Calu3 (cell line): ENCODE measurements at regions of chr20 and their contacts with region 1.

Region 1: GRCh38 chr20:24257171-24257570 is 212.3 kb upstream of the SYNDIG1 start:
- DNase-seq: no peak
- H3K4me3 Mint-ChIP-seq: no peak overlapping the region
- H3K27ac Mint-ChIP-seq: no peak overlapping the region
- H3K4me1 Mint-ChIP-seq: no peaks in the 10 kb centered on the region
- H3K27me3 Mint-ChIP-seq: no peaks in the 10 kb centered on the region
- CTCF ChIP-seq: no peak

Region 2: DNA sequence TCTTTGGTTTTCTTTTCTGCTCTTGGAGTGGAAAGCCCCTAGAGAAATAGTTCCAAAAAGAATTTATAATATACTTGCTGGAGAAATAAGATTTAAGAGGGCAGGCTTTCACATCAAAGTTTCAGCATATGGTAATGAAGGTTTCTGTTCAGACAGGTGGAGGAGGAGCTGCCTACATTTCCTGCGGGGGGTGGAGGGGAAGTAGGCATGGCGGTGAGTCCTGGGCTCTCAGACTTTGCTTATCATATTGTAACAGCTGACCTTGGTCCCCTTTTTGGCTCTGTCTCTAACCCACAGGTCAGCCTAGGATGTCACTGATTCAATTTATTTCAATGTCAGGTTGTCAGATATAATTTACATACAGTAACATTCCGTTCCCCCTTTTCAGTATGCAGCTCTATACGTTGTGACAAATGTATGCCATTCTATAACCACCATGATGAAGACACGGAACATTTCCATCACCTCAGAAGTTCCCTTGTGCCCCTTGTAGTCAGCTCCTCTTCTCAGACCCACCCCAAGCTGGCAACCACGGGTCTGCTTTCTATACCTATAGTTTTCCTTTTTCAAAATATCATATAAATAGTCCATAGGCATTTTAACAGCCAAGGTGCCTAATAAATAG is 191.0 kb before region 1 on chr20:
- CTCF ChIA-PET with region 1: no interaction called
- intact Hi-C with region 1: no loop called
- DNase-seq: no peak
- H3K4me3 Mint-ChIP-seq: no peak overlapping the region
- H3K27ac Mint-ChIP-seq: no peak overlapping the region
- H3K4me1 Mint-ChIP-seq: no peaks in the 10 kb centered on the region
- H3K27me3 Mint-ChIP-seq: peaks cover 19% of the 10 kb centered on the region
- CTCF ChIP-seq: no peak

Region 3: GRCh38 chr20:24077145-24077544 is 180.0 kb before region 1 on chr20:
- CTCF ChIA-PET with region 1: no interaction called
- intact Hi-C with region 1: no loop called
- DNase-seq: no peak
- H3K4me3 Mint-ChIP-seq: no peak overlapping the region
- H3K27ac Mint-ChIP-seq: no peak overlapping the region
- H3K4me1 Mint-ChIP-seq: no peaks in the 10 kb centered on the region
- H3K27me3 Mint-ChIP-seq: no peaks in the 10 kb centered on the region
- CTCF ChIP-seq: no peak

Region 4: DNA sequence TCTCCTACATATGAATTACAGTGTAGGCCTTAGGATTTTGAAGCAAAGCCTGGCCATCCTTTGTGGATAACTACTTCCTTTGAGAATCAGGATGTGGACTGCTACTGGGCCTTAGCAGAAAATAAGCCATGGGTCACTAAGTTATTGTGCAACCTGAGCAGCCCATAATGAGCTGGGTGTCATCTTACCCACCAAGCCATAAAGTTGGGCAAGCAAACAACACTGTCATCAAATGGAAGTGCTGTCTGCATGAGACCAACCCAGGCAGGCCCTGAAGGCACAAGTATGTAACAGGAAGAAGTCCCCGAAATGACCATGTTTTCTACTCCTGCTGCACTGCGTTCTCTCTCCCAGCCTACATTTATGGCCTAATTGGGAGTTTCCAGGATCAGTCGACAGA is 63.0 kb before region 1 on chr20:
- CTCF ChIA-PET with region 1: no interaction called
- intact Hi-C with region 1: loop called (anchors 10 kb)
- DNase-seq: no peak
- H3K4me3 Mint-ChIP-seq: no peak overlapping the region
- H3K27ac Mint-ChIP-seq: no peak overlapping the region
- H3K4me1 Mint-ChIP-seq: no peaks in the 10 kb centered on the region
- H3K27me3 Mint-ChIP-seq: no peaks in the 10 kb centered on the region
- CTCF ChIP-seq: no peak

Region 5: GRCh38 chr20:24699321-24700165 is 442.4 kb after region 1 on chr20:
- CTCF ChIA-PET with region 1: no interaction called
- intact Hi-C with region 1: no loop called
- DNase-seq: no peak
- H3K4me3 Mint-ChIP-seq: no peak overlapping the region
- H3K27ac Mint-ChIP-seq: no peak overlapping the region
- H3K4me1 Mint-ChIP-seq: no peaks in the 10 kb centered on the region
- H3K27me3 Mint-ChIP-seq: peaks cover 34% of the 10 kb centered on the region
- CTCF ChIP-seq: no peak